ENCODE measurements at regions of chr13 and their contacts with region 1.

Region 1: DNA sequence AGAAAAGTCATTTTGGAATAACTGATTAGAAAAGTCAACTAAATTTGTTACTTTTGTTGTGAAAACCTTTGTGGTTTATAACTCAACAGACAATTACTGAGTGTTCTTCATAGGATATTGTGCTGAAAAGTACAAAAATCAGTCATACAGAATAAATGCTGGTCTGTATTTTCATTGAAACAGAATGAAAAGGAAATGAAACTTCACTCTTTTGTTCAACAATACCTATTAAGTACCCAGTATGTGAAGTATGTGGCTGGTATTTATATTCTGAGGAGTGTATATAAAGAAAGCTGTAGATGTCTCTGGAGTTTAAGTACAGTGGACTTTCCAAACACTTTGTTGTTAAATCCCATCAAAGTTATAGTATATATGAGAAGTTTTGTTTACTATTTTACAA is 828.4 kb upstream of the ATXN8OS start:
- DNase-seq: no peak

Region 2: GRCh38 chr13:69213331-69213850 is 65.8 kb before region 1 on chr13:
- intact Hi-C with region 1: loop called in 1 of 2 experiments (anchors 2 kb)
- DNase-seq: no peak